Endothelial cell of umbilical vein (primary cell): ENCODE measurements at regions of chr7 and their contacts with region 1.

Region 1: DNA sequence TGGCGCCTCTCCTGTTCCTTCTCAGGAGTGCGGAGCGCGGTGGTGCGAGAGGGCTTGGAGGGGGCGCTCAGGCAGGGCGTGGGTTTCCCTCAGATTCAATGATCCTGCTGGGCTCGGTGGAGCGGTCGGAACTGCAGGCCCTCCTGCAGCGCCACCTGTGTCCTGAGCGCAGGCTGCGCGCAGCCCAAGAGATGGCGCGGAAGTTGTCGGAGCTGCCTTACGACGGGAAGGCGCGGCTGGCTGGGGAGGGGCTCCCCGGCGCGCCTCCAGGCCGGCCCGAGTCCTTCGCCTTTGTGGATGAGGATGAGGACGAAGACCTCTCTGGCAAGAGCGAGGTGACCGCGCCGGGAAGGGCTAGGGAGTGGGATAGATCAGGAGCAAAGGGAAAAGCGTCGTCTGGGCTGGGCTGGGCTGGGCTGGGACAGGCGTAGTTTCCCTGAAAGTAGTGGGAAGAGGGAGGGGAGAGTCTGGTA is 17.0 kb downstream of the FAM131B start:
- DNase-seq: peak; percentile 55
- H3K4me3 ChIP-seq: peak overlapping the region in 2 of 3 experiments; percentile 21 to 47
- H3K27ac ChIP-seq: no peak overlapping the region
- H3K4me1 ChIP-seq: peaks cover 4% of the 10 kb centered on the region
- H3K27me3 ChIP-seq: peaks cover 20 to 24% of the 10 kb centered on the region in 2 experiments
- CTCF ChIP-seq: peak; percentile 58 to 73
- POLR2A ChIP-seq: no peak

Region 2: GRCh38 chr7:143181349-143181748 is 164.1 kb before region 1 on chr7:
- CTCF ChIA-PET with region 1: no interaction called
- POLR2A ChIA-PET with region 1: no interaction called
- dilution Hi-C with region 1: no loop called
- intact Hi-C with region 1: no loop called
- DNase-seq: no peak
- H3K4me3 ChIP-seq: no peak overlapping the region
- H3K27ac ChIP-seq: no peak overlapping the region
- H3K4me1 ChIP-seq: no peaks in the 10 kb centered on the region
- H3K27me3 ChIP-seq: peaks cover 0 to 2% of the 10 kb centered on the region in 2 experiments
- CTCF ChIP-seq: no peak
- POLR2A ChIP-seq: no peak

Region 3: DNA sequence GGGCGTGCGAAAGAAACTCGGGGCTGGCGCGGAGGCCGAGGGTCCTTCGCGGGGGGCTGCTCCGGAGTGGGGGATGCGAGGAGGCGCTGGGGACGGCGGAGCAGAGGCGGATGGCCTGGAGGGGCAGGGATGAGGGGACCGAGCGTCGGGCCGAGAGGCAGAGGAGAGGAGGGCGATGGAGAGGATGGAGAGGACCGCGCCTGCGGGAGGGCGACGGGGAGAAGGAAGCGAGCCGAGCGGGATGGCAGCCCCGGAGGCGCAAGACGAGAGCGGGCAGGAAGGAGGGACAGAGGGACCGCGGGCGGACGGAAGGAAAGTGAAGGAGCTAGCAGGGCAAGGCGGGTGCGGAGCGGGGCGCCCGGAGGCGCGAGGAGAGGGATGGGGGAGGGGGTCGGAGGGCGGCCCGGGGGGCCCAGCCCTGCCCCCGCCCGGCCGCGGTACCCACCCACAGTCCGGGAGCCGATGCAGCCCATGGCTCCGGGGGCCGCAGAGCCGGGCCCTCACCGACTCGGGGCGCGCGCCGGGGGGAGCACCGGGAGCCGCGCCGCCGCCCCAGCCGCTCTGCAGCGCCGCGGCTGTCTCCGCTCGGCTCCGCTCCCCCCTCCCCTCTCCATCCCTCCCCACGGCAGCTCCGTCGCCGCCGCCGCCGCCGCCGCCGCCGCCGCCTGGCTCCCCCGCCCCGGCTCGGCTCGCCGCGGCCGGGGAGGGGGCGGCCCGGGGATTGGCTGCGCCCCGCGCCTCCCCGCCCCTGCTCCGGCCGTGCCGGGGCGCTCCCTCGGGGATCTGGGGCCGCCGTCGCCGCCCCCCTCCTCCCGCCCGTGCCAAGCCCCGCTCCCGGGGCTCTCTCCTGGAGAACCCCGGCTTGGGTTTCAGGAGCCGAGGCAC is 16.9 kb after region 1 on chr7 and contains the start of gene FAM131B:
- CTCF ChIA-PET with region 1: interaction called, 8 read pairs
- POLR2A ChIA-PET with region 1: no interaction called
- dilution Hi-C with region 1: no loop called
- intact Hi-C with region 1: loop called (anchors 2 kb)
- DNase-seq: no peak
- H3K4me3 ChIP-seq: peak within 1 kb of the TSS; percentile 43 to 51 (median 45)
- H3K27ac ChIP-seq: no peak within 1 kb of the TSS
- H3K4me1 ChIP-seq: no peaks in the 10 kb centered on the region
- H3K27me3 ChIP-seq: peaks cover 26 to 42% of the 10 kb centered on the region in 2 experiments
- CTCF ChIP-seq: no peak
- POLR2A ChIP-seq: no peak
- total RNA-seq, gene FAM131B: 1.4 and 1.6 TPM in 2 replicates